B cell (primary cell): ENCODE measurements at regions of chr7 and their contacts with region 1.

Region 1: DNA sequence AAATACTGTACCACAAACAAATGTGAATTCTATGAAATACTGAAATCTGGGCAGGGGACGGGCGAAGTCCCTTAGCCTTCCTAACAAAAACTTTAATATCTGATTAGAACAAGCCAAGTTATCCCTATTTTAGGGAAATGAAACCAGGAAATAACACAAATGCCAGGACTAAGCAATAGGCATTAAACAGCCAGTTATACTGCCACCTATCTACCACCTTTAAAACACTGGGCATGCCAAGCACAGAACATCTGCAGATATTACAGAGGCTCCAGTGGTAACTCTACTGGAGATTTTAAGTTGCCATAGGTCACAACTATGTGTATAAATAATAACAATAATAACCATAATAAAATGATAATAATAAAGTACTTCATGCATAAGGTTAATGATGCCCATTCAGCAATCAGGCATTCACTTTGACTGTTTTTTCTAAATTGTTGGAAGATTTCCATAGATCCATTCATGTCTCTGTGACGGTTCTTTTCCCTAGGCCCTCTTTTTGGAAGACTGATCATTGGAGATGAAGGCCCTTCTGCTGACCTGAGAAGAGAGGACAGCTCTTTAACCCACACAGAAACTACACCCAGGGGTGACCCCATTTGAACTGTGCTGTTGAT is 195.7 kb downstream of the CACNA2D1 start:
- DNase-seq: no peak
- ATAC-seq: no peak
- H3K4me3 ChIP-seq: no peak overlapping the region
- H3K4me3 Mint-ChIP-seq: no peak overlapping the region
- H3K27ac ChIP-seq: no peak overlapping the region
- H3K27ac Mint-ChIP-seq: no peak overlapping the region
- H3K4me1 ChIP-seq: no peaks in the 10 kb centered on the region
- H3K4me1 Mint-ChIP-seq: no peaks in the 10 kb centered on the region
- H3K27me3 ChIP-seq: no peaks in the 10 kb centered on the region
- H3K27me3 Mint-ChIP-seq: no peaks in the 10 kb centered on the region
- CTCF ChIP-seq: no peak

Region 2: DNA sequence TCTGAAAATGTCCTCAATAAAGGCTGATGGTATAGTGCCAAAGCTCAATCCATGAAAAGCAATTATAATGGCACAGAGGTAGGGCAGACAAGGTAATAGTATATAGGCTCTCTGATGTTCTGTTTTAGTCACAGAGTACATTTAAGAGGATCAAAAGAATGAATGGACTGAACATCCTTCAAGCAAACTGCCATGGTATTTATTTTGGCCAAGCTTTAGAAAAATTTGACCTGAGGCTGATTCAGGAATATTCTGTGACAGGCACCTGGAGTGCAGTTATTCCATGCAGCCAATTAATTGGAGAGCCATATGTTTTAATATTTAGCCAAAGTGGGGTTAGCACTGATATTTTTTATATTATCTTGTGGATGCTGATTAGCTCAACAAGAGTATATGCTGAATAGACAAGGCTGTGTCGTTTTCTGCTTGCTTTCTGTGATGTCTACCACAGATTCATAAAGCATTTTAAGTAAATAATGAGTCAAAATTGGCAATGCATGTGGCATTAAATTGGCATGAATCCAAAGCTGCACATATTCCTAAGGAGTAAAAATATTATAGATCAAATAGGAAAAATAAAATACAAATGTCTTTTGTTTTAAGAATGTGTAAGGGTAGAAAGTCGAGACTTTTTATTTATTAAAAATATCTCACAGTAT is 737.3 kb after region 1 on chr7:
- CTCF ChIA-PET with region 1: no interaction called
- POLR2A ChIA-PET with region 1: no interaction called
- intact Hi-C with region 1: loop called (anchors 5 kb)
- DNase-seq: no peak
- ATAC-seq: no peak
- H3K4me3 ChIP-seq: no peak overlapping the region
- H3K4me3 Mint-ChIP-seq: no peak overlapping the region
- H3K27ac ChIP-seq: no peak overlapping the region
- H3K27ac Mint-ChIP-seq: no peak overlapping the region
- H3K4me1 ChIP-seq: no peaks in the 10 kb centered on the region
- H3K4me1 Mint-ChIP-seq: no peaks in the 10 kb centered on the region
- H3K27me3 ChIP-seq: no peaks in the 10 kb centered on the region
- H3K27me3 Mint-ChIP-seq: no peaks in the 10 kb centered on the region
- CTCF ChIP-seq: no peak

Region 3: DNA sequence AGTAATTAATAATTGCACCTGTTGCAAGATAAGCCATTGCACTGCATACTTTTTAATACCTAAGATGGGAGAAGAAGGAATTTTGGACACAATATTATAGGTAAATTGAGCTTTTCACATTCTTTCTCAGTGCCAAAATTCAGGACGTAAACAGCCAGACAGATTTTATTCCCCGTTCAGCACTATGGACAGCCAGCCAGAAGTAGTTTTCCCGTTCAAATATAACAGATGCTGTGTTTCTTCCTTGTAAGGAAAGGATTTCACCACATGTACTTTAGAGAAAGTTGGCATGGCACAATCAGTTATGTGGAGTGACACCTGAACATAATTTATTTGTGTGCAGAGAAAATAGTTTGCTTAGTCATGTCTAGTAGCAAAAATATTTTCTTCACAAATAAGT is 1366.2 kb after region 1 on chr7:
- CTCF ChIA-PET with region 1: no interaction called
- POLR2A ChIA-PET with region 1: no interaction called
- intact Hi-C with region 1: no loop called
- DNase-seq: no peak
- ATAC-seq: no peak
- H3K4me3 ChIP-seq: no peak overlapping the region
- H3K4me3 Mint-ChIP-seq: no peak overlapping the region
- H3K27ac ChIP-seq: no peak overlapping the region
- H3K27ac Mint-ChIP-seq: no peak overlapping the region
- H3K4me1 ChIP-seq: no peaks in the 10 kb centered on the region
- H3K4me1 Mint-ChIP-seq: no peaks in the 10 kb centered on the region
- H3K27me3 ChIP-seq: no peaks in the 10 kb centered on the region
- H3K27me3 Mint-ChIP-seq: no peaks in the 10 kb centered on the region
- CTCF ChIP-seq: no peak